ENCODE measurements at regions of chr20 and their contacts with region 1.

Region 1: DNA sequence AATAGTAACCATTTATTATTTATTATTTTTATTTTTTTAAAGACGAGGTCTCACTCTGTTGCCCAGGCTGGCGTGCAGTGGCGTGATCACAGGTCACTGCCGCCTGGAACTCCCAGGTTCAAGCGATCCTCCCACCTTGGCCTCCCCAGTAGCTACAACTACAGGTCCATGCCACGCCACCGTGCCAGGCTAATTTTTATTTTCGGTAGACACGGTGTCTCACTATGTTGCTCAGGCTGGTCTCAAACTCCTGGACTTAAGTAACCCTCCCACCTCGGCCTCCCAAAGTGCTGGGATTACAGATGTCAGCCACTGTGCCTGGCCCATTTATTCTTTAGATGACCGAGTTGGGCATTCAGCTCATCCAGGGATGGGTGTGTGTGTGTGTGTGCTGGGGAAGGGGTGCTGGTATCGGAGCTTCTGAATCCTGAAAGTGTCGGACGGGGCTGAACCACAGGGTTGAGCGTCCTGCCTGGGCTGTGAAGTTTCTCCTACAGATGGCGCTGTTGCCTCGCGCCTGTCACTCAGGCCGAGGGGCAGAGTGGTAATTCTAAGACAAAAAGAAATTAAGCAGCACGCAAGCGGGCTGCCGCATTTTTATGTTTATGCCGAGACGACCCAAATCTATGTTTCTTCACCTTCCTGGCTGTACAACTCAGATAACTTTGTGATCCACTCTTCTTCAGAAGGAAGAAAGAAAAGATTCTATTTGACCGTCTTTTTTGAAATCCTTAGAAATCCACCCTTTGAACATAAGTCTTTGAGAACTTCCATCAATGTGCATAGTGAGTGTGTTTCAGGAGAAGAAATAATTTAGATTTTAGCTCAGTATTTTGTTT is 252.8 kb downstream of the CDH26 start:
- DNase-seq: peak; percentile 57 to 69
- ATAC-seq: peak; percentile 69 to 92 (median 84)
- H3K4me3 ChIP-seq: no peak overlapping the region
- H3K27ac ChIP-seq: no peak overlapping the region
- H3K4me1 ChIP-seq: peaks cover 0 to 13% (median 0%) of the 10 kb centered on the region in 9 donors
- H3K27me3 ChIP-seq: peaks cover 0 to 20% (median 0%) of the 10 kb centered on the region in 7 donors
- CTCF ChIP-seq: peak; percentile 78 to 92 (median 88)

Region 2: DNA sequence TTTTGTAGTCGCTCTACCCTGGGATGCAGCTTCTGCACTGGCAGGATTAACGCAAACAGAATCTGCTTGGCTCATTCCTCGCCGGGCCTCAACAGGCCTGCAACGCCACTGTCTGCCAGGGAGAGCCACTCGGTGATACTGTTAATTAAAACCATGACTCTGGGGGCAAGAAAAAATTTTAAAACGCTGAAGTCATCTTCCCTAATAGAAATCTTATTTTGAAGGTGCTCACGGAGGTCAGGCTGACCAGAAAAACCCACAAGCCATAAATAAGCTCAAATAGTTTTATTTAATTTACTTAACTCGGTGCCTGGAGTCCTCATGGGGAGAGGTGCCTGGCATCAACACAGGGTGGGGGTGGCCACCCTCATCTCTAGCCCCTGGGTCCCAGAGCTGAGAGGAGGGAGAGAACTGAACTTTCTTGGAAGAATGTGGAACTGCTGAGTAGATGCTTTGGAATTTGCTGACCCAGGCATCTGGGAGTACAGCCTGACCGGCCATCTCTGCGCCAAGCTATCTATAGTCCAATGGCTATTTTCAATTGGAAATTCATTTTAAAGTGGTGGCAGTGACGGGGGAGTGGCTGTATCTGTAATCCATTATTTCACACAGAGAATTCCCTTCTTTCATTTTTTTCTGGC is 148.1 kb before region 1 on chr20:
- intact Hi-C with region 1: loop called in 6 of 10 experiments (anchors 5 to 10 kb)
- DNase-seq: no peak
- ATAC-seq: peak in 5 of 8 donors; percentile 20 to 55 (median 35)
- H3K4me3 ChIP-seq: no peak overlapping the region
- H3K27ac ChIP-seq: peak overlapping the region in 2 of 10 donors; percentile 25 to 37
- H3K4me1 ChIP-seq: peaks cover 3 to 44% (median 21%) of the 10 kb centered on the region in 9 donors
- H3K27me3 ChIP-seq: peaks cover 0 to 5% (median 0%) of the 10 kb centered on the region in 7 donors
- CTCF ChIP-seq: no peak

Region 3: DNA sequence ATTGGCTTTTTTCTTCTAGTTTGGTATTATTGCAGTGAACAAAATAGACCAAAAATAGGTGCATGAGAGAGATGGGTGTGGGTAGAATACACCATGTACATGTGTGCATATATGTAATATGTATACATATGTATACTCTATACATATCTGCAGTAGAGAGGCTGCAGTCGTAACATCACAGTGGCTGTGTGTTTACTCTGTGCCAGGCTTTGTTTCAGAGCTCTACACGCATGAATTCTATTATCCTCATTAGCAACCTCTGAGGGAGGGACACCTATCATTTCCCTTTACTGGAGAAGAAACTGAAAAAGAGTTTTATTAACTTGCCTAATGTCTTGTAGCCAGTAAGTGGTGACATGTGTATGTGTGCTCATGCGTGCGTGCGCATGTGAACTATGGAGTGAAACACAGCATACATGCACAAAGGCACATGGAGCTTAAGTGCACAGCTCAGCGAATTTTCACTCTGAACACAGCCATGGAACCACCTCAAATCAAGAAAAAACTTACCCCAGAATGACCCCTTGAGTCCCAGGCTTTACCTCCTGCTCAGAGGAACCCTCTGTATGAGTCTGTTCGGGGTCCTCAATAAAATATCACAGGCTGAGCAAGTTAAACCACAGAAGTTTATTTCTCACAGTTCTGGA is 199.7 kb after region 1 on chr20:
- intact Hi-C with region 1: no loop called
- DNase-seq: no peak
- ATAC-seq: no peak
- H3K4me3 ChIP-seq: no peak overlapping the region
- H3K27ac ChIP-seq: no peak overlapping the region
- H3K4me1 ChIP-seq: no peaks in the 10 kb centered on the region
- H3K27me3 ChIP-seq: peaks cover 0 to 6% (median 0%) of the 10 kb centered on the region in 7 donors
- CTCF ChIP-seq: no peak

Region 4: GRCh38 chr20:61120595-61121515 is 909.9 kb after region 1 on chr20:
- intact Hi-C with region 1: loop called in 7 of 10 experiments (anchors 5 to 10 kb)
- DNase-seq: peak in 1 of 2 donors; percentile 34
- ATAC-seq: peak in 3 of 8 donors; percentile 50 to 63 (median 57)
- H3K4me3 ChIP-seq: no peak overlapping the region
- H3K27ac ChIP-seq: no peak overlapping the region
- H3K4me1 ChIP-seq: peaks cover 0 to 2% (median 0%) of the 10 kb centered on the region in 9 donors
- H3K27me3 ChIP-seq: peaks cover 0 to 23% (median 0%) of the 10 kb centered on the region in 7 donors
- CTCF ChIP-seq: peak in 8 of 9 donors; percentile 19 to 65 (median 53)

Region 5: DNA sequence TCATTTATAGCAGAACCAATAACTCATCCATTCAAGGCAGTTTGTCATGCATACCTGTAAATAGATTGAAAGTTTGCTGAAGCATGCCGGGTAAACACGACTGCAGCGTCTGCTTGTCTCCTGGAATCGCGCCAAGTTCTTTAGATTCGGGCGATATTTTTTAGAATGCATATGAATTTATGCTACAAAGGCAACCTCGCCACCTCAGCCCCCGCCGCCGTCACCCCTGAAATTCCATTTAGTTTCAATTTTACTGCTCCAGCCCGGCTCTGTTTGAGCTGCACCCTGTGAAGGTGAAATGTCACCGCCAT is 1023.8 kb after region 1 on chr20:
- intact Hi-C with region 1: loop called in 4 of 10 experiments (anchors 5 to 10 kb)
- DNase-seq: no peak
- ATAC-seq: no peak
- H3K4me3 ChIP-seq: no peak overlapping the region
- H3K27ac ChIP-seq: no peak overlapping the region
- H3K4me1 ChIP-seq: no peaks in the 10 kb centered on the region
- H3K27me3 ChIP-seq: peaks cover 0 to 25% (median 7%) of the 10 kb centered on the region in 7 donors
- CTCF ChIP-seq: no peak